Left ventricle myocardium inferior (tissue), 1 donor: ENCODE measurements at regions of chr2 and their contacts with region 1.

Region 1: DNA sequence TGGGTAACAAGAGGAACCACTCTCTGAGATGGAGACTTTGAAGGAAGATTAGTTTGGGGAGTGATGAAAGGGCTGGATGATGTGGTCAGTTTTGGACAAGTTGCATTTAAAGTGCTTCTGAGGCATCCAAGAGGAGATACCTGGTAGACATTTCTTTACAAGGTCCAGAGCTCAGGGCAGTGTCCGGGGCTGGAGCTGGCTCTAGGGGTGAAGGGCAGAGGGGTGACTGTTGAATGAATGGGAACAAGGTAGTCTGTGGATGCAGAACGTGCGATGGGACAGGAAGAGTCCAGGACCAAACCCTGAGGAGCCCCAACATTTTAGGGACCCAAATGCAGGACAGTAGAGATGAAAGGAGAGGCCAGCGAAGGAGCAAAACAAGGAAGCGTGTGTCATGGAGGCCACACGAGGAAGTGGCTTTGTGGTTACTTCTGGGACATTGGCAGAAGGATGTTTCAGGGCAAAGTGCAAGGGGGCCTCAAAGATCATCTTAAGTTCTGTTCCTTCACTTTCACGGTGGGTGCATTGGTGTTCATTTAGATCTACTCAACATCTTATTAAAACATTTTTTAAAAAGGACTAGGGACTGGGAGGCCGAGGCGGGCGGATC is 13.6 kb upstream of the GPR35 start:
- DNase-seq: no peak
- H3K4me3 ChIP-seq: no peak overlapping the region
- H3K27ac ChIP-seq: no peak overlapping the region
- H3K4me1 ChIP-seq: no peaks in the 10 kb centered on the region
- H3K27me3 ChIP-seq: no peaks in the 10 kb centered on the region
- CTCF ChIP-seq: no peak

Region 2: DNA sequence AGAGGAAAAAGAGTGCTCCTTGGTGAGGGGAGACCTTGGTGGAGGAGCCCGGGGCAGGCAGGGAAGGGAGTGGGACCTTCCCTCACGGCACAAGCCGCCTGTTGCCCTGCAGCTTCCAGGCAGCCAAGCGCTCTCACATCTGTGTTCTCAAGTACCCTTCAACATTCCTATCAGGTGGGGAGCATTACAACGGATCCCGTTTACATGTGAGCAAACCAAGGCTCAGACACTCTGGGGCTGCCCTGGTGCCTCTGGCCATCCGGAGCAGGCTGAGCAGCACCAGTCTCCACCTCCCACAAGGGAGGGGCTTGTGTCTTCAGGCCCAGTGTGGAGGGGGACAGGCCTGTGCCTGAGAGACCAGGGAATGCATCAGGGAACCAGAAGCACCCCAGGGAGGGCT is 137.8 kb after region 1 on chr2:
- intact Hi-C with region 1: loop called (anchors 5 kb)
- DNase-seq: no peak
- H3K4me3 ChIP-seq: no peak overlapping the region
- H3K27ac ChIP-seq: no peak overlapping the region
- H3K4me1 ChIP-seq: no peaks in the 10 kb centered on the region
- H3K27me3 ChIP-seq: peaks cover 32% of the 10 kb centered on the region
- CTCF ChIP-seq: no peak